Naive thymus-derived CD4-positive, alpha-beta T cell (primary cell): ENCODE measurements at regions of chr19 and their contacts with region 1.

Region 1: DNA sequence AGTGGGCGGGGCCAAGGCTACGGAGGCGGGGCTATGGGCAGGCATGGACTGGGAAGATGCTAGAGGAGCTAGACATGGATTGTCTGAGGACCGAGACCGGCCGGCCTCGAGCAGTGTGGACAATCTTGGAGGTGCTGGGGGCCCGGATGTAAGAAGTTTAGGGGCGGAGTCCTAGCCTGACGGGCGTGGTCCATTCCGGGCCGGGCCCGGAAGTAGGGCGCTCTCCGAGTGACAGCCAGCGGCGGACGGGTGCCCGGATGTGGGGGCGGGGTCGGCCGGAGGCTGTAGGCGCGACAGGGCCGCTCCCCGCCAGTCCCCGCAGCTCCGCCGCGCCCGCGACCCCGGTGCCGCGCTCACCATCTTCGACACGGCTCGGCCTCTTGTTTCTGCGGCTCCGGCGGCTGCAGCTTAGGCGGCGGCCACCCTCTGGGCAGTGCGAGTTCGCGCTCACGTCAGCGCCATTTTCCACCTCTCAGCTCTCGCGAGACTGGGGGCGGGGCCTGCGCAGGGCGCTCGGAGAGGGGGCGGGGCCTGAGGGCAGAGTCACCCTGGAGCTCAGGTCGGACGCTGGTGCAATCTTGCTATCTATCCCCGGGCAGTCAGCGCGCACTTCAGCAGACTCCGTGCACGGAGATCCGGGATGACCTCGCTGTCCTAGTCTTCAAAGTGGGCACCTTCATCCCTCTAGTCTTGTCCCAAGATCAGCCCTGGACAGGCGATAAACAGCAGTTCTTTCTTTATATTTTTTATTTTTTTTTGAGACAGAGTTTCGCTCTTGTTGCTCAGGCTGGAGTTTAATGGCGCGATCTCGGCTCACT is at the start of gene ZNF414:
- DNase-seq: peak; percentile 93 to 100 (median 98)
- ATAC-seq: peak; percentile 88
- H3K4me3 ChIP-seq: peak within 1 kb of the TSS; percentile 73
- H3K4me3 Mint-ChIP-seq: peak within 1 kb of the TSS; percentile 89 to 97 (median 92)
- H3K27ac ChIP-seq: peak within 1 kb of the TSS; percentile 98
- H3K27ac Mint-ChIP-seq: peak within 1 kb of the TSS; percentile 91 to 100 (median 99)
- H3K4me1 ChIP-seq: peaks cover 52 to 63% of the 10 kb centered on the region in 2 donors
- H3K4me1 Mint-ChIP-seq: peaks cover 32 to 64% (median 47%) of the 10 kb centered on the region in 7 donors
- H3K27me3 ChIP-seq: no peaks in the 10 kb centered on the region
- H3K27me3 Mint-ChIP-seq: no peaks in the 10 kb centered on the region
- total RNA-seq, gene ZNF414: 36.0 to 69.2 (median 60.8) TPM

Region 2: GRCh38 chr19:7618771-7619514 is 895.0 kb before region 1 on chr19:
- CTCF ChIA-PET with region 1: no interaction called
- POLR2A ChIA-PET with region 1: no interaction called
- intact Hi-C with region 1: no loop called
- DNase-seq: no peak
- ATAC-seq: no peak
- H3K4me3 ChIP-seq: no peak overlapping the region
- H3K4me3 Mint-ChIP-seq: no peak overlapping the region
- H3K27ac ChIP-seq: no peak overlapping the region
- H3K27ac Mint-ChIP-seq: no peak overlapping the region
- H3K4me1 ChIP-seq: no peaks in the 10 kb centered on the region
- H3K4me1 Mint-ChIP-seq: peaks cover 0 to 8% (median 0%) of the 10 kb centered on the region in 7 donors
- H3K27me3 ChIP-seq: no peaks in the 10 kb centered on the region
- H3K27me3 Mint-ChIP-seq: no peaks in the 10 kb centered on the region

Region 3: GRCh38 chr19:8321060-8321985 is 192.6 kb before region 1 on chr19 and contains the starts of genes NDUFA7 and RPS28:
- CTCF ChIA-PET with region 1: no interaction called
- POLR2A ChIA-PET with region 1: interaction called, 4 read pairs
- intact Hi-C with region 1: loop called (anchors 1 kb)
- DNase-seq: peak; percentile 94 to 97 (median 96)
- ATAC-seq: peak; percentile 98
- H3K4me3 ChIP-seq: peak within 1 kb of the TSS; percentile 98
- H3K4me3 Mint-ChIP-seq: peak within 1 kb of the TSS; percentile 90 to 99 (median 98)
- H3K27ac ChIP-seq: peak within 1 kb of the TSS; percentile 96
- H3K27ac Mint-ChIP-seq: peak within 1 kb of the TSS; percentile 94 to 99 (median 98)
- H3K4me1 ChIP-seq: peaks cover 25% of the 10 kb centered on the region in 2 donors
- H3K4me1 Mint-ChIP-seq: peaks cover 16 to 44% (median 29%) of the 10 kb centered on the region in 7 donors
- H3K27me3 ChIP-seq: no peaks in the 10 kb centered on the region
- H3K27me3 Mint-ChIP-seq: no peaks in the 10 kb centered on the region
- total RNA-seq, gene NDUFA7: 16.8 to 50.3 (median 30.0) TPM
- total RNA-seq, gene RPS28: 2,319 to 4,111 (median 3,327) TPM

Region 4: DNA sequence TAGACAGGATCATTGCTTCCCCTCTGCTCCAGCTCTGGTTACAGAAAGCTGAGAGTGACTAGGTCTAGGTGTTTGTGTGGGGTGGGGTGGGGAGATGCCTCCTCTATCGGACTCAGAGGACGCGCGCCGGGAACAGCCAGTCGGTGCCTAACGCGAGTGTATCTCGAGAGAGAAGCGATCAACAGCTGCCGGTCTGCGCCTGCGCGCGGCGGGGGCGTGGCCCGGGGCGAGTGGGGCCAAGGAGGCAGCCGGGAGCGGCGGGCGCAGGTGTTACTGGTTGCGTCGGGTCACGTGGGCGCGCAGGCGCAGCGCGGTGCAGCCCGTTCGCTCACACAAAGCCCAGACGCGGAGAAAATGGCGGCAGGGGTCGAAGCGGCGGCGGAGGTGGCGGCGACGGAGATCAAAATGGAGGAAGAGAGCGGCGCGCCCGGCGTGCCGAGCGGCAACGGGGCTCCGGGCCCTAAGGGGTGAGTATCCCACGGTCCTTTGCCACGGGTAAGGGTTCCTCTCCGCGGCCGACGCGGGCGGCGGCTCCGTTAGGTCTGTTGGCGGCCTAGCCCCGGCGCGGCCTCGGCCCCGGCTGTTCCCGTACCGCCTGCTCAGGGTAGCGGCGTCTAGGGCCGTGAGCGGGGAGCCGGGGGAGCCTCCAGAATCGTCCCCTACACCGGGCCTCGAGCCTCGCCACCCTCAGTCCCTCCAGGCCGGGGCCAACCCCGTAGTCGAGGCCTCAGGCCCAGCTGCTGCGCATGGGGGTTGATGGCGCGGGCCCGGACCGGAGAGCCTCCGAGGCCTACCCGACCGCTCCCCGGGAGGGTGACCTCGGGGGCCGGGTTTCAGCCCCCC is 69.0 kb before region 1 on chr19 and contains the start of gene HNRNPM:
- CTCF ChIA-PET with region 1: no interaction called
- POLR2A ChIA-PET with region 1: interaction called, 19 read pairs
- intact Hi-C with region 1: loop called (anchors 1 kb)
- DNase-seq: peak; percentile 100
- ATAC-seq: peak; percentile 97
- H3K4me3 ChIP-seq: peak within 1 kb of the TSS; percentile 89
- H3K4me3 Mint-ChIP-seq: peak within 1 kb of the TSS; percentile 87 to 100 (median 98)
- H3K27ac ChIP-seq: peak within 1 kb of the TSS; percentile 98
- H3K27ac Mint-ChIP-seq: peak within 1 kb of the TSS; percentile 95 to 99 (median 98)
- H3K4me1 ChIP-seq: peaks cover 33 to 38% of the 10 kb centered on the region in 2 donors
- H3K4me1 Mint-ChIP-seq: peaks cover 31 to 50% (median 42%) of the 10 kb centered on the region in 7 donors
- H3K27me3 ChIP-seq: no peaks in the 10 kb centered on the region
- H3K27me3 Mint-ChIP-seq: no peaks in the 10 kb centered on the region
- total RNA-seq, gene HNRNPM: 175 to 280 (median 272) TPM

Region 5: DNA sequence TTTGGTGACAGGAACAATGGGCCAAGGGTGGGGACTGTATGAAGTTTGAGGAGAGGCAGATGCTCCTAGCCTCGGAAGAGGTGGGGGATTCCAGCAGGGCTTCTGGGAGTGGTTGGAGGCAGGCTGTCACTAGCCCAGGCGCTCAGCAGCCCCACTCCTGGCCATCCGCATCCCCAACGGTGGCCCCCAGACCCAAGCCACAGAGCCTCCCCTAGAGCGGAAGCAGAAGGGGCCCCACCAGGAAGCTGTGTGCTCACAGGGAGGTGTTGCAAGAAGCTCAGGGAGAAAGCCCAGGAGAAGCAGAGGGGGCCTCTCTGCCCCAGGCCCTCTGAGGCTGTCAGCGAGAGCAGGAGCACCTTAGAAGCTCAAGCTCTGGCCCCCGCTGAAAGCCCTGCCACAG is 19.7 kb before region 1 on chr19:
- CTCF ChIA-PET with region 1: interaction called, 5 read pairs
- POLR2A ChIA-PET with region 1: interaction called, 32 read pairs
- intact Hi-C with region 1: no loop called
- DNase-seq: no peak
- ATAC-seq: peak; percentile 54
- H3K4me3 ChIP-seq: no peak overlapping the region
- H3K4me3 Mint-ChIP-seq: peak overlapping the region in 7 of 10 donors; percentile 29 to 62 (median 41)
- H3K27ac ChIP-seq: peak overlapping the region; percentile 55
- H3K27ac Mint-ChIP-seq: peak overlapping the region; percentile 49 to 87 (median 75)
- H3K4me1 ChIP-seq: peaks cover 0 to 10% of the 10 kb centered on the region in 2 donors
- H3K4me1 Mint-ChIP-seq: peaks cover 5 to 33% (median 16%) of the 10 kb centered on the region in 7 donors
- H3K27me3 ChIP-seq: no peaks in the 10 kb centered on the region
- H3K27me3 Mint-ChIP-seq: no peaks in the 10 kb centered on the region

Region 6: DNA sequence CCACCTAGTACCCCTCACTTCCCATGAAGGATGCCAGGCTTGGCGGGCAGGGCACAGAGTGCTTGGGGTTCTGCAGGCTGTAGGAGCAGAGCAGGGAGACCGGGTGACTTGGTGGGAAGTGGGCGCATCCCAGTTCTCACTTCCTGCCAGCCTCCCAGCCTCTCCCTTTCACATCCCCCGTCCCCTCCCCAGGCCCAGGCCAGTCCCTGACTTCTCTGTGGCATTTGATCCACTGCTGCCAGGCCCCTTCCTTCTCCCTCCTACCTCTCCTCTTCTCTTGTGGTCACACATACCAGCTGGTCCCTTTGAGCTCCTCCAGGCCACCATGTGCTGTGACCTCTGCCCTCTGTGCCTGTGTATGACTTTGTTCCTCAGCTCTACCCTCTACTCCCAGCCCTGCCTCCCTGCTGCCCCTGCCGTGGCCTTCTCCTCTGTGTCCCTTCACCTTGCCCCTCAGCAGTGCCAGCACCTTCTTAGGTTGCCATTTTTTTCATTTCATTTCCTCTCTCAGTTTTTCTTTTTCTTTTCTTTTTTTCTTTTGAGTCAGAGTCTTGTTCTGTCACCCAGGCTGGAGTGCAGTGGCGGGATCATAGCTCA is 43.8 kb after region 1 on chr19:
- CTCF ChIA-PET with region 1: no interaction called
- POLR2A ChIA-PET with region 1: interaction called, 566 read pairs
- intact Hi-C with region 1: no loop called
- DNase-seq: no peak
- ATAC-seq: peak; percentile 16
- H3K4me3 ChIP-seq: no peak overlapping the region
- H3K4me3 Mint-ChIP-seq: peak overlapping the region in 2 of 10 donors; percentile 4 to 23
- H3K27ac ChIP-seq: no peak overlapping the region
- H3K27ac Mint-ChIP-seq: peak overlapping the region in 7 of 9 donors; percentile 45 to 93 (median 77)
- H3K4me1 ChIP-seq: peaks cover 6 to 16% of the 10 kb centered on the region in 2 donors
- H3K4me1 Mint-ChIP-seq: peaks cover 13 to 37% (median 27%) of the 10 kb centered on the region in 7 donors
- H3K27me3 ChIP-seq: no peaks in the 10 kb centered on the region
- H3K27me3 Mint-ChIP-seq: no peaks in the 10 kb centered on the region

Region 7: DNA sequence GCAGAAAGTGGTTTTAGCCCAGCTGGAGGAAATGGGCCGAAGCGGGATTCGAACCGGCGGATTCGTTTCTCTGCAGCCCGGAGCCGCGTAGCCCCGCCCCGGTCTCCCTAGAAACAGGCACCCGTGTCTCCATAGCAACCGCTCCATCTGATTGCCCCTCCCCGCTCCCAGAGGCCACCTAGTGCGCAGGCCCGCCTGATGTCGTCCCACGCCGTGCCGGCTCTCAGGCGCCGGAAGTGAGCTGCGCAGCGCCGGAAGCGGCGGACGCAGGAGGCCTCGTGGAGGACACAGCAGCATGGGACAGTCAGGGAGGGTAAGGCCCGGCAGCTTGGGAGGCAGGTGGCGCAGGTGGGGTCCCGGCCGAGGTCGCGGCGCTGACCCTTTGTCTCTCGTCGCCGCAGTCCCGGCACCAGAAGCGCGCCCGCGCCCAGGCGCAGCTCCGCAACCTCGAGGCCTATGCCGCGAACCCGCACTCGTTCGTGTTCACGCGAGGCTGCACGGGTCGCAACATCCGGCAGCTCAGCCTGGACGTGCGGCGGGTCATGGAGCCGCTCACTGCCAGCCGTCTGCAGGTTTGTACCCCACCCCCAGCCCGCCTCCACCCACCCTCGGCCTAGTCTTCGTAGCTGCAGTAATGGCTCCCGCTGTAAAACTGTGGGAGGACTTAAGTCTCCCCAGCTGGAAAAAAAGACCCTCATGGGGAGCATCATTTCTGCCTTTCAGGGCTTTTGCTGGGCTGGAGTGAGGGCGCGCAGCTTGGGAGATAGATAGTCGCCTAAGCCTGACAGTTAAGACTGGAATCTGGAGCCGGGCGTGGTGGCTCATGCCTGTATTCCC is 1592.4 kb after region 1 on chr19 and contains the start of gene PPAN:
- CTCF ChIA-PET with region 1: no interaction called
- POLR2A ChIA-PET with region 1: no interaction called
- intact Hi-C with region 1: loop called in 1 of 2 experiments (anchors 10 kb)
- DNase-seq: peak; percentile 88 to 98 (median 97)
- ATAC-seq: peak; percentile 86
- H3K4me3 ChIP-seq: peak within 1 kb of the TSS; percentile 60
- H3K4me3 Mint-ChIP-seq: peak within 1 kb of the TSS; percentile 75 to 91 (median 88)
- H3K27ac ChIP-seq: peak within 1 kb of the TSS; percentile 86
- H3K27ac Mint-ChIP-seq: peak within 1 kb of the TSS; percentile 92 to 98 (median 97)
- H3K4me1 ChIP-seq: peaks cover 53 to 65% of the 10 kb centered on the region in 2 donors
- H3K4me1 Mint-ChIP-seq: peaks cover 32 to 61% (median 56%) of the 10 kb centered on the region in 7 donors
- H3K27me3 ChIP-seq: no peaks in the 10 kb centered on the region
- H3K27me3 Mint-ChIP-seq: no peaks in the 10 kb centered on the region
- total RNA-seq, gene PPAN: 87.6 to 122 (median 109) TPM